ENCODE measurements at regions of chr12 and their contacts with region 1.

Region 1: DNA sequence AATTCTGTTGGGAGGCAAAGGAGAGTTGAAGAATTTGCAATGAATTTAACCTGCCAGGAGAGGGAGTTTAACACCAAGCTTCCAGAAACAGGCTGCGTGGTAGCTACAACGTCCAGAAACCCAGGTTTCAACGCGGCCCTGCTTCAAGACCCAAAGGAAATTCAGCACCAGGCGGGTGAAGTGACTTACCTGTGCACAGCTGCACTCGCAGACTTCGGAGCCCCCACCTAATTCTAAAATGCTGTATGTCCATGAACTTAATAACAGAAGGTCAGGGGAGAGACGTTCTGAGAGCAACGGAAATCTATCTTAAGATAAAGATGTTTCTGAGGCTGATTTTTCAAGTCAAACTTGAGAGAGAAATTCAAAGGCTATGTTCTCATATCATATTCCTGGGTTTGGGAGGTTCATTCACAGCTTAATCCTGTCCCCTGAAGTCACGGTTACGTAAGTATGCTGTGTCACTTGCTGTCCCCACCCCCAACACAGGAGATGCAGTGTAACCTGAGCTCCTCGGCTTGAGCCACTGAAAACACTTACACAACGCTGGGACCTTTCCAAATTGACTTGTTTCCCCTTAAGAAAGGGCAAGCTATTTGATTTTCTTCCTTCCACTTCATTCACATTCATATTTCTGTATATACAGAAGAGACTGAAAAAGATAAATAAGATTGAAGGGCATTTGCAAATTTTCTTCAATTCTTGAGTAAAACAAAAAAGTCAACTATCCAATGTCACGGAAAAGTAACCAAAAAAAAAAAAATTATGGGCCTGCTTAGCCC is 22.7 kb downstream of the CLIP1 start:
- DNase-seq: peak in 33 of 35 experiments; percentile 10 to 79 (median 40)
- ATAC-seq: peak; percentile 82 to 87 (median 84)
- H3K4me3 ChIP-seq: no peak overlapping the region
- H3K4me3 Mint-ChIP-seq: peak overlapping the region; percentile 57 to 69 (median 67)
- H3K27ac ChIP-seq: peak overlapping the region; percentile 46
- H3K27ac Mint-ChIP-seq: peak overlapping the region; percentile 94
- H3K4me1 ChIP-seq: peaks cover 0 to 13% of the 10 kb centered on the region in 2 experiments
- H3K4me1 Mint-ChIP-seq: peaks cover 39 to 42% (median 40%) of the 10 kb centered on the region in 3 donors
- H3K27me3 ChIP-seq: no peaks in the 10 kb centered on the region
- H3K27me3 Mint-ChIP-seq: no peaks in the 10 kb centered on the region

Region 2: GRCh38 chr12:121124402-121125098 is 1275.2 kb before region 1 on chr12:
- CTCF ChIA-PET with region 1: no interaction called
- POLR2A ChIA-PET with region 1: interaction called in 1 of 2 experiments, 15 read pairs
- DNase-seq: no peak
- ATAC-seq: no peak
- H3K4me3 ChIP-seq: no peak overlapping the region
- H3K4me3 Mint-ChIP-seq: no peak overlapping the region
- H3K27ac ChIP-seq: no peak overlapping the region
- H3K27ac Mint-ChIP-seq: no peak overlapping the region
- H3K4me1 ChIP-seq: peaks cover 21 to 30% of the 10 kb centered on the region in 2 experiments
- H3K4me1 Mint-ChIP-seq: peaks cover 51 to 66% (median 57%) of the 10 kb centered on the region in 3 donors
- H3K27me3 ChIP-seq: no peaks in the 10 kb centered on the region
- H3K27me3 Mint-ChIP-seq: no peaks in the 10 kb centered on the region

Region 3: GRCh38 chr12:122412851-122413433 is 13.2 kb after region 1 on chr12:
- CTCF ChIA-PET with region 1: interaction called, 4 to 11 read pairs
- POLR2A ChIA-PET with region 1: no interaction called
- DNase-seq: peak in 1 of 35 experiments; percentile 40
- ATAC-seq: peak in 2 of 4 experiments; percentile 43 to 62
- H3K4me3 ChIP-seq: no peak overlapping the region
- H3K4me3 Mint-ChIP-seq: peak overlapping the region; percentile 40 to 54 (median 53)
- H3K27ac ChIP-seq: peak overlapping the region; percentile 49
- H3K27ac Mint-ChIP-seq: peak overlapping the region; percentile 88 to 89
- H3K4me1 ChIP-seq: peaks cover 0 to 13% of the 10 kb centered on the region in 2 experiments
- H3K4me1 Mint-ChIP-seq: peaks cover 25 to 35% (median 33%) of the 10 kb centered on the region in 3 donors
- H3K27me3 ChIP-seq: no peaks in the 10 kb centered on the region
- H3K27me3 Mint-ChIP-seq: no peaks in the 10 kb centered on the region

Region 4: DNA sequence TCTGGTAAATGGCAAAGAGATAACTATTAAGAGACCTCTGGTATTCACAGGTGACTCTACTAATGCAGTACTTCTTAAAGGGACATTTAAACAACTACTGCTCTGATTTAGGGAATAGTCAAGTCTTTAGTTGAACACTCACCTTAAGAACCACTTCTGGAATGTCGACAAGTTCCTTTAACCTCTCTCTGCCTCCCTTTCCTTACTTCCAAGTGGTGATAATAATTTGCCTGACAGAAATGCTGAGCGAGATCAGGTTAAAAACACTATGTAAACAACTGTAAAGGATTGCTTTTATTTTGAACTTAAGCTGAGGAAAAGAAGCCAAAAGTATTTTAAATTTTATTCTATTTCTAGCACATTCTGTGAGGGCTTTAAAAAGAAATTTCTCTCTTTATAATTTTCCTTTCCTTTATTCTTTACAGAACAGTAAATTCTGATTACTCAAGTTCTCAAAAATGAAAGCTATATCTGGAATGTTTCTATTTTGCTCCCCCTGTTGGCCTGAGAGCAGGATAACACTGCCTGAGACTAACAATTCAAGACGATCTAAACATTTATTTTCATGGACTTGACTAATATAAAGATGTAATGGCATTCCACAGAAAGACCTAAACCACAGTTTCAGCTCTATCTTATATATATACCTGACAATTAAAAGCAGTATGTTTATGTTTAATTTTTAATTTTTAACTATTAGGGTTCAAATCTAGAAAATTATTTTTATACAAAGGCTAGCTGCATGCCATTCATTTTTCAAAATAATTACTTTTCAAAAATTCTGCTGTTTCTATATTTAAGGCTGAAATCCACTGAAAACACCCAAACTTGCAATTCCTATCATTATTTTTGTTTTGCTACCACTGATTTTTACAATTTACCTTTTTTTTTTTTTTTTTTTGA is 71.8 kb after region 1 on chr12:
- CTCF ChIA-PET with region 1: interaction called, 31 to 180 read pairs
- POLR2A ChIA-PET with region 1: interaction called, 9 to 12 read pairs
- DNase-seq: peak in 10 of 35 experiments; percentile 7 to 80 (median 20)
- ATAC-seq: peak; percentile 54 to 80 (median 72)
- H3K4me3 ChIP-seq: no peak overlapping the region
- H3K4me3 Mint-ChIP-seq: no peak overlapping the region
- H3K27ac ChIP-seq: peak overlapping the region; percentile 16
- H3K27ac Mint-ChIP-seq: peak overlapping the region; percentile 12 to 49
- H3K4me1 ChIP-seq: peaks cover 0 to 5% of the 10 kb centered on the region in 2 experiments
- H3K4me1 Mint-ChIP-seq: peaks cover 7 to 9% (median 8%) of the 10 kb centered on the region in 3 donors
- H3K27me3 ChIP-seq: no peaks in the 10 kb centered on the region
- H3K27me3 Mint-ChIP-seq: no peaks in the 10 kb centered on the region